Sigmoid colon (tissue), 7 donors: ENCODE measurements at regions of chr17 and their contacts with region 1.

Region 1: DNA sequence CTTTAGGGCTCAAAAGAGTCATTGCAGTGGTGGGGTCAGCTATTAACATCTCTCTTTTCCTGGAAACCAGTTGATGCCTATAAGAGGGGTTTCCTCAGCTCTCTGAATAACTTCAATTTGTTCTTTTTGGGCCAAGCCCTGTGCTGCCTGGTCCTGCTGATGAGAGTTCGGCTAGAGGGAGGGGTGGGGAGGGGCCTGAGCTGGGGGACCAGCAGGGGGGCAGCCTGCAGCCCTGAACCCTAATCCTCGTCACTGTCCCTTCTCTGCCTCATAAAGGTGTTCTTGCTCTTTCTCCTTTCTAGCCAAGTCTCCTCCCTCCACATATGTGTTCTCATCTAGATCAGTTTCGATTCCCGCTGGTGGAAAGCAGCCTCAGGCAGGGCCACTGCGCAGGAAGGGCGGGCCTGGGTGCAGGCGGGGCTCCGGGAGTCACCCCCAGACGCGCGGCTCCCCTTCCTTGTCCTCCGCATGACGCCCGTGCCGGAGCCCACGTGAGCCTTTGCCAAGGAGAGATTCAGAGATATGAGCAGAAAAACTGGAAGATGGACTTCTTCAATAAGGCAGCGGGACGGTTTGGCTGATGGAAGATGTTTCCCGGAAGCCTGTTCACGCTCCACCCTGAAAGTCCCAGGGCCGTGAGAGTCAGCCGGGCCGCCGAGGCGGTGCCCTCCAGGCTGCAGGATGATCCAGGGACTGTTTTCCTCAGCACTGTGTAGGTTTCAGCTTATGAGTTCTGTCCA is 15.0 kb upstream of the RHOT1 start:
- DNase-seq: peak; percentile 93
- H3K4me3 ChIP-seq: peak overlapping the region; percentile 41 to 64 (median 58)
- H3K27ac ChIP-seq: peak overlapping the region; percentile 82 to 92 (median 86)
- H3K4me1 ChIP-seq: peaks cover 0 to 20% (median 12%) of the 10 kb centered on the region in 4 donors
- H3K27me3 ChIP-seq: no peaks in the 10 kb centered on the region
- CTCF ChIP-seq: no peak
- EP300 ChIP-seq: no peak
- POLR2A ChIP-seq: no peak

Region 2: GRCh38 chr17:32006957-32007462 is 120.3 kb before region 1 on chr17 and contains the start of gene LRRC37B:
- intact Hi-C with region 1: loop called (anchors 5 kb)
- DNase-seq: peak; percentile 92
- H3K4me3 ChIP-seq: peak within 1 kb of the TSS; percentile 52 to 96 (median 78)
- H3K27ac ChIP-seq: peak within 1 kb of the TSS; percentile 78 to 93 (median 86)
- H3K4me1 ChIP-seq: peaks cover 0 to 26% (median 25%) of the 10 kb centered on the region in 4 donors
- H3K27me3 ChIP-seq: no peaks in the 10 kb centered on the region
- CTCF ChIP-seq: peak; percentile 80 to 94 (median 88)
- EP300 ChIP-seq: no peak
- POLR2A ChIP-seq: peak in 1 of 2 donors; percentile 13
- total RNA-seq, gene LRRC37B: 14.0 to 44.9 (median 17.6) TPM

Region 3: DNA sequence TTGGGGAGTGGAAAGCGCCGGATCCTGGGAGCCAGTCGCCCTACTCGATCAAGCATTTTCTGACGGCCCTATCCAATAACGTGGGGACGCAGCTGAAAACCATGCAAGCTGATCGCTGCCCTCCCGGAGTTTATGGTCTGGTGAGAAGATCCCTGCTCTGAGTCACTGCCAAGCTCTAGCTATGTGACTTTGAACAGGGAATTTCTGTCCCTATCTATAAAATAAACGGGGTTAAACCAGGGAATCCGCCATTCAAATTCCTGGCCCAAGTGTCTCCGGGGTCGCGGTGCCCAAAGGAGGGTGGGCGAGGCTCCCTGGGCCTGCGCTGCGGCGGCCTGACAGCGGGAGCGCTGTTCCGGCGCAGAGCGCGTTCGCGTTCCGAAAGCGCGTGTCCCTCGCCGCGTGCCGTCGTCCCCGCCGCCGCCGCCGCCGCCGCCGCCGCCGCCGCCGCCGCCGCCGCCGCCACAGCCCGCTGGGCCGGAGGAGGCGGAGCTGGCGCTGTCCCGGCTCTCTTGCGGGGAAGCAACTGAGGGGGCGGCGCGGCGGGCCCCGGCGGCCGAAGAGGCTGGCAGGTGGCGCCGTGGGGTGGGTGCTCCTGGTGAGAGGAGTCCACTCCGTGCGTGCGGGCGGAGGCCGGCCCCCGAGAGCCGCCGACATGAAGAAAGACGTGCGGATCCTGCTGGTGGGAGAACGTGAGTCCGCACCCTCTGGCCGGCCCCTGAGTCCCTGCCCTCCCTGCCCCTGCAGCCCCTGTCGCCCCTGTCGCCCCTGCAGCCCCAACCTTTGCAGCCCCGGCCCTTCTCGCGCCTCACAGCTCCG is 14.9 kb after region 1 on chr17 and contains the start of gene RHOT1:
- intact Hi-C with region 1: loop called (anchors 2 kb)
- DNase-seq: peak; percentile 87
- H3K4me3 ChIP-seq: peak within 1 kb of the TSS; percentile 69 to 96 (median 88)
- H3K27ac ChIP-seq: peak within 1 kb of the TSS; percentile 87 to 97 (median 92)
- H3K4me1 ChIP-seq: peaks cover 0 to 41% (median 31%) of the 10 kb centered on the region in 4 donors
- H3K27me3 ChIP-seq: no peaks in the 10 kb centered on the region
- CTCF ChIP-seq: peak in 3 of 4 experiments; percentile 34 to 58 (median 56)
- EP300 ChIP-seq: no peak
- POLR2A ChIP-seq: no peak
- total RNA-seq, gene RHOT1: 48.9 to 71.5 (median 58.0) TPM

Region 4: GRCh38 chr17:32161506-32162365 is 34.4 kb after region 1 on chr17:
- intact Hi-C with region 1: no loop called
- DNase-seq: no peak
- H3K4me3 ChIP-seq: no peak overlapping the region
- H3K27ac ChIP-seq: no peak overlapping the region
- H3K4me1 ChIP-seq: peaks cover 0 to 9% (median 0%) of the 10 kb centered on the region in 4 donors
- H3K27me3 ChIP-seq: no peaks in the 10 kb centered on the region
- CTCF ChIP-seq: no peak
- EP300 ChIP-seq: no peak
- POLR2A ChIP-seq: no peak